ENCODE measurements at regions of chr17 and their contacts with region 1.

Region 1: DNA sequence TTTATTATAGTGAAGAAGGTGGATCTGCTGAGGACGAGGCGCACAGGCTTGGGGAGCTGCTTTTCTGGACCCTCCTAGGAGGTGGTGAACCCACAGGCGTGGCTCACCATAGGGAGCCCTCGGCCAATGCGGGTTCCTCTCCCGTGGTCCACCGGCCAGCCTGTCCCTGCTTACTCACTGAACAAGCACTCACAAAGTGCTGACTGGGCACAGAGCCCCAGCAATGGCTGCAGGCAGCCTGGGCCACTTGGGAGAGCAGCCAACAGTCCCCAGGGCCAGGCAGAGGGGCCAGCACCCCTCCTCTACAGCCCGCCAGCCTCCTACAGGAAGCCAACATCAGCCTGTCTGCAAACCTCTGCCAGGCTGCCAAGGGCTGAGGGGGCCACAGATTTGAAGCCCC is 19.1 kb upstream of the NCBP3 start:
- DNase-seq: no peak
- ATAC-seq: no peak
- H3K4me3 ChIP-seq: no peak overlapping the region
- H3K27ac ChIP-seq: no peak overlapping the region
- H3K4me1 ChIP-seq: no peaks in the 10 kb centered on the region
- H3K27me3 ChIP-seq: no peaks in the 10 kb centered on the region
- CTCF ChIP-seq: no peak
- POLR2A ChIP-seq: no peak
- RAD21 ChIP-seq: no peak

Region 2: DNA sequence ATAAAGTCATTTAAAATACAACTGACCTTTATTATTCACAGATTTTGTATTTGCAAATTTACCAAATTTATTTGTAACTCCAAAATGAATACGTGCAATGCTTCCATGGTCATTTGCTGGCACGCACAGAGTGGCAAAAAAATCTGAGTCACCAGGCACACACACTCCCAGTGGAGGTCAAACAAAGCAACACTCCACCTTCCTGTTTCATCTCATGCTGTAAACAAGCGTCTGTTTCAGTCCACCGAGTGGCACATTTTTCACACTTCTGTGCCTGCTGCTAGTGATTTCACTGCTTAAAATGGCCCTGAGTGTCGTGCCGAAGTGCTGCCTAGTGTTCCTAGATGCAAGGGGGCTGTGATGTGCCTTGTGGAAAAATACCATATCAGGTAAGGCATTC is 46.4 kb before region 1 on chr17:
- CTCF ChIA-PET with region 1: no interaction called
- POLR2A ChIA-PET with region 1: no interaction called
- RAD21 ChIA-PET with region 1: no interaction called
- intact Hi-C with region 1: no loop called
- DNase-seq: no peak
- ATAC-seq: no peak
- H3K4me3 ChIP-seq: no peak overlapping the region
- H3K27ac ChIP-seq: no peak overlapping the region
- H3K4me1 ChIP-seq: no peaks in the 10 kb centered on the region
- H3K27me3 ChIP-seq: no peaks in the 10 kb centered on the region
- CTCF ChIP-seq: no peak
- POLR2A ChIP-seq: no peak
- RAD21 ChIP-seq: no peak

Region 3: DNA sequence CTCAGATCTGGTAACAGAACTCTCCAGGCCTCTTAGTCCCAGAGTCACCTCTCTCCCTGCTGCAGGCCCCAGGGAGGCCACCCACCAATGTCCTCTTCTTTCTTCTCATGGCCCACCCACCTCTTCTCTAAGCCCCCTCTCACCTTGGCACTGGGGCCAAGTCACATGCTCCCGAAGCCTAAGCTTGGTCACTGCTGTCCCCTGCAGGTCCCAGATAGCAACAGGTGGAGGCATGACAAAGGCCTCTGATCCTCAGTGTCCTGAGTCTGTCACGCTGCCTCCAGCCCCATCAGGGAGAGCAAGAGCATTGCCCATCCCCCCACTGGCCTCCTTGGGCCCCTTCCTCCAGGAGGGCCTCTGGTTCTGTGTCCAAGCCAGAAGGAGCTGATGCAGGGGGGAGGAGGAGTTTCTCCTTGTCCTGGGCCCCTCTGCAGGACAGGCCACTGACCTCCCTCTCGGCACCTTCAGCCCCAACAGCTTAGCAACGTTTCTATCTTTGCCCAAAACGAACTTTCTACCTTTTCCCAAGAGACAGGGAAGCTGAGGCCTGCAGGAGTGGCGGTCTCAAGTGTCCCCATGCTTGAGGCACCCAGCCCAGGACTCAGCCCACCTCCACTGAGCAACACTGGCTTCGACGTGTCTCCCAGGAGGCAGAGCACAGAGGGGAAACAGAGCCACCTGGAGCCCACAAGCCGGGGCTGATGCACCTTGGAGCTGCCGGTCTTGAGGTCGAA is 42.5 kb after region 1 on chr17:
- CTCF ChIA-PET with region 1: interaction called, 3 read pairs
- POLR2A ChIA-PET with region 1: no interaction called
- RAD21 ChIA-PET with region 1: no interaction called
- intact Hi-C with region 1: loop called (anchors 1 kb)
- DNase-seq: no peak
- ATAC-seq: peak; percentile 77
- H3K4me3 ChIP-seq: no peak overlapping the region
- H3K27ac ChIP-seq: no peak overlapping the region
- H3K4me1 ChIP-seq: no peaks in the 10 kb centered on the region
- H3K27me3 ChIP-seq: no peaks in the 10 kb centered on the region
- CTCF ChIP-seq: peak; percentile 64 to 89 (median 65)
- POLR2A ChIP-seq: no peak
- RAD21 ChIP-seq: peak; percentile 96

Measured in HCT116 (cell line).